Naive thymus-derived CD4-positive, alpha-beta T cell (primary cell): ENCODE measurements at regions of chr5 and their contacts with region 1.

Region 1: GRCh38 chr5:39148983-39149534 is 70.3 kb downstream of the FYB1 start:
- DNase-seq: peak in 6 of 9 donors; percentile 28 to 55 (median 48)
- ATAC-seq: peak; percentile 44
- H3K4me3 ChIP-seq: no peak overlapping the region
- H3K4me3 Mint-ChIP-seq: peak overlapping the region in 6 of 10 donors; percentile 7 to 63 (median 36)
- H3K27ac ChIP-seq: peak overlapping the region; percentile 64
- H3K27ac Mint-ChIP-seq: peak overlapping the region; percentile 66 to 94 (median 82)
- H3K4me1 ChIP-seq: peaks cover 19 to 55% of the 10 kb centered on the region in 2 donors
- H3K4me1 Mint-ChIP-seq: peaks cover 58 to 90% (median 72%) of the 10 kb centered on the region in 7 donors
- H3K27me3 ChIP-seq: no peaks in the 10 kb centered on the region
- H3K27me3 Mint-ChIP-seq: no peaks in the 10 kb centered on the region

Region 2: DNA sequence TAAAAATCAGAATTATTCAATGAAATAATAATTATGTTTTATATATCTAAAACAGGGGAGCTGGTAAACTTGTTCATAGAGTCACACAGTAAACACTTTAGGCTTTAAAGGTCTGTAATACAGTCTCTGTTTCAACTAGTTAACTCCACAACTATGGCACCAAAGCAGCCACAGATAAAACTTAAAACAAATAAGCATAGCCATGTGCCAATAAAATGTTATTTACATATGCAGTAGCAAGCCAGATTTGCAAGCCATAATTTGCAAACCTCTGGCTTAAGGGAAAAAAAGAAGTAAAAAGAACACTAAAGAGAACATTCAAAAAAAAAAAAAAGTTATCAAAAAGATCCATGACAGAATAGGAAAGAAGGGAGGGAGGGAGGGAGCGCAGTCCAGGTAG is 99.7 kb before region 1 on chr5:
- CTCF ChIA-PET with region 1: no interaction called
- POLR2A ChIA-PET with region 1: no interaction called
- intact Hi-C with region 1: no loop called
- DNase-seq: no peak
- ATAC-seq: no peak
- H3K4me3 ChIP-seq: no peak overlapping the region
- H3K4me3 Mint-ChIP-seq: peak overlapping the region in 5 of 10 donors; percentile 4 to 42 (median 15)
- H3K27ac ChIP-seq: no peak overlapping the region
- H3K27ac Mint-ChIP-seq: peak overlapping the region in 3 of 9 donors; percentile 10 to 54 (median 48)
- H3K4me1 ChIP-seq: peaks cover 4 to 16% of the 10 kb centered on the region in 2 donors
- H3K4me1 Mint-ChIP-seq: peaks cover 16 to 90% (median 82%) of the 10 kb centered on the region in 7 donors
- H3K27me3 ChIP-seq: no peaks in the 10 kb centered on the region
- H3K27me3 Mint-ChIP-seq: no peaks in the 10 kb centered on the region

Region 3: DNA sequence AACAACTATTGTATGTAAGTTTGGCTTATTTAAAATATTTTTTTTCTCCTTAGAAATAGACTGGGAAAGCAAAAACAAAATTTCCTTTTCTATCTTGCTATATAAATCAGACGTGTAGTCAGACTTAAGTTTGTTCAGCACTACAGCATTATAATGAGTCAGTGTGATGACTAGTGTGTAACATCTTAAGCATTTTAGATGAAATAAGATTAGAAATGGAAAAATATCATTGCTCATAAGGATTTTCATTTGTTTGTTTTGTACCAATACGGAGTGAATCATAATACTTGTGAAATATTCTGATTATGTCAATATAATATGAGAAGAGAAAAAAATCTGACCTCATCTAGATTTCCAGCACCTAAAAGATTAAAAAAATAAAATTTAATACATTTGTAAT is 10.2 kb before region 1 on chr5:
- CTCF ChIA-PET with region 1: interaction called, 4 read pairs
- POLR2A ChIA-PET with region 1: interaction called, 3 read pairs
- intact Hi-C with region 1: loop called in 1 of 2 experiments (anchors 1 kb)
- DNase-seq: no peak
- ATAC-seq: no peak
- H3K4me3 ChIP-seq: no peak overlapping the region
- H3K4me3 Mint-ChIP-seq: no peak overlapping the region
- H3K27ac ChIP-seq: no peak overlapping the region
- H3K27ac Mint-ChIP-seq: peak overlapping the region in 3 of 9 donors; percentile 14 to 77 (median 23)
- H3K4me1 ChIP-seq: peaks cover 6 to 10% of the 10 kb centered on the region in 2 donors
- H3K4me1 Mint-ChIP-seq: peaks cover 12 to 51% (median 31%) of the 10 kb centered on the region in 7 donors
- H3K27me3 ChIP-seq: no peaks in the 10 kb centered on the region
- H3K27me3 Mint-ChIP-seq: no peaks in the 10 kb centered on the region

Region 4: DNA sequence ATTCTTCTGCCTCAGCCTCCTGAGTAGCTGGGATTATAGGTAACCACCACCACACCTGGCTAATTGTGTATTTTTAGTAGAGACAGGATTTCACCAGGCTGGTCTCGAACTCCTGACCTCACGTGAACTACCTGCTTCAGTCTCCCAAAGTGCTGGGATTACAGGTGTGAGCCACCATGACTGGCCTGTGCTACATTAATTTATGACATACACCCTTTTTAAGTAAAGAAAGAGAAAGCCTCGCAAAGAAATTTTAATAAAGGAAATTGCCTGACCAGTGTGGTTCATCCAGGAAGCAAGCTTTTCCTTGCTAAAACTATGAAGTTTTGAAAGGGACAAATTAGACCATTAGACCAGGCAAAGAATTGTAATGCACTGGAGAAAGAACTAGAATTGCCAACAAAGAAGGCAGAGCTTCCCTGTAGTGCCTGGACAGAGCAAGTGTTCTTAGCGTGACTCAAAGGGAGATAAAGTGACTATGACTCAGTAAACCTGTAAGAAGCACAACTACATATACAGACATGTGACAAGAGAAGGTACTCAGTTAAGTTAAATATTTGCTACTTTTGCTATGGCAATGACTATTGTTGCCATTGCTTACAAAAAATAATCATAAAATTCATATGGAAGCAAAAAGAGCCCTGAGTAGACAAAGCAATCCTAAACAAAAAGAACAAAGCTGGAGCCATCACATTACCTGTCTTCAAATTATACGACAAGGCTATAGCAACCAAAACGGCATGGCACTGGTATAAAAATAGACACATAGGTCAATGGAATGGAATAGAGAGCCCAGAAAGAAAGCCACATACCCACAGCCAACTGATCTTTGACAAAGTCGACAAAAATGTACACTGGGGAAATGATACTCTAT is 15.7 kb after region 1 on chr5:
- CTCF ChIA-PET with region 1: interaction called, 3 read pairs
- POLR2A ChIA-PET with region 1: interaction called, 5 read pairs
- intact Hi-C with region 1: loop called (anchors 1 to 2 kb)
- DNase-seq: peak in 1 of 9 donors; percentile 34
- ATAC-seq: peak; percentile 71
- H3K4me3 ChIP-seq: peak overlapping the region; percentile 12
- H3K4me3 Mint-ChIP-seq: peak overlapping the region; percentile 58 to 83 (median 76)
- H3K27ac ChIP-seq: peak overlapping the region; percentile 60
- H3K27ac Mint-ChIP-seq: peak overlapping the region; percentile 78 to 96 (median 89)
- H3K4me1 ChIP-seq: peaks cover 73 to 74% of the 10 kb centered on the region in 2 donors
- H3K4me1 Mint-ChIP-seq: peaks cover 71 to 99% (median 95%) of the 10 kb centered on the region in 7 donors
- H3K27me3 ChIP-seq: no peaks in the 10 kb centered on the region
- H3K27me3 Mint-ChIP-seq: no peaks in the 10 kb centered on the region

Region 5: DNA sequence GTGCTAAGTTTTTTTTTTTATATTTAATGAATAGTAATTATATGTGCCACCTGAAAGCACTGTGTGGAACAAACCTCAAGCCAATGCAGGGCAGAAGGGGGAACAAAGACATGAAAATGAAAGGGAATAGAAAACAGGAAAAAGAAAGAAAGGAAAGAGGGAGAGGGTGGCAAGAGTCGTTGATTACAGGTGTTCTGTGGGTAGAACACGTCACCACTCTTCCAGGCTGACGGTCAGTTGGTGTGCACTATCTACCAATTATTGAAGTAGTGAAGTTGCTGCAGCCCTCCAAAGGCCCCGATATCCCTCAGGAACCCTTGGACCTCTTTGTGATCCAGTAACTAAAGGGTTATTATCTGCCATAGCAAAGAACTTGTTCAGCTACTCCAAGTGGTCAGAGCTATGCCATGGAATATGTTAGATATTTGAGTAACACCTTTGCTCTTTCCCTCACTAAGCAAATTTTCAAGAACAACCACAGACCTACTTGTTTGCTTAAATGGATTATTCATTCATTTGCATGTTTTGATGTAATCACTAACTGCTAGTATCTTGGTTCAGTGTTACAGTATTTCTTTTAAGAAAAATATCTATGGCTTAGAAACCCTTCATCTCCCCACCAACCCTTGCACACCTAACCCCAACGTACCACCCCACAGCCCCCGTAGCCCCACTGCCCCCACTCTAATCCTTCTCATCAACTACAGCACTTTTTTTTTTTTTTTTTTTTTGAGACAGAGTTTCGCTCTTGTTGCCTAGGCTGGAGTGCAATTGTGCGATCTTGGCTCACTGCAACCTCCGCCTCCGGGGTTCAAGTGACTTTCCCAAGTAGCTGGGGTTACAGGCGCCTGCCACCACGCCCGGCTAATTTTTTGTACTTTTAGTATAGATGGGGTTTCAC is 39.0 kb after region 1 on chr5:
- CTCF ChIA-PET with region 1: interaction called, 7 read pairs
- POLR2A ChIA-PET with region 1: interaction called, 14 read pairs
- intact Hi-C with region 1: loop called in 1 of 2 experiments (anchors 5 kb)
- DNase-seq: peak in 2 of 9 donors; percentile 46 to 50
- ATAC-seq: peak; percentile 45
- H3K4me3 ChIP-seq: peak overlapping the region; percentile 36
- H3K4me3 Mint-ChIP-seq: peak overlapping the region; percentile 78 to 98 (median 88)
- H3K27ac ChIP-seq: peak overlapping the region; percentile 73
- H3K27ac Mint-ChIP-seq: peak overlapping the region; percentile 92 to 99 (median 98)
- H3K4me1 ChIP-seq: peaks cover 75 to 85% of the 10 kb centered on the region in 2 donors
- H3K4me1 Mint-ChIP-seq: peaks cover 58 to 97% (median 91%) of the 10 kb centered on the region in 7 donors
- H3K27me3 ChIP-seq: no peaks in the 10 kb centered on the region
- H3K27me3 Mint-ChIP-seq: no peaks in the 10 kb centered on the region

Region 6: DNA sequence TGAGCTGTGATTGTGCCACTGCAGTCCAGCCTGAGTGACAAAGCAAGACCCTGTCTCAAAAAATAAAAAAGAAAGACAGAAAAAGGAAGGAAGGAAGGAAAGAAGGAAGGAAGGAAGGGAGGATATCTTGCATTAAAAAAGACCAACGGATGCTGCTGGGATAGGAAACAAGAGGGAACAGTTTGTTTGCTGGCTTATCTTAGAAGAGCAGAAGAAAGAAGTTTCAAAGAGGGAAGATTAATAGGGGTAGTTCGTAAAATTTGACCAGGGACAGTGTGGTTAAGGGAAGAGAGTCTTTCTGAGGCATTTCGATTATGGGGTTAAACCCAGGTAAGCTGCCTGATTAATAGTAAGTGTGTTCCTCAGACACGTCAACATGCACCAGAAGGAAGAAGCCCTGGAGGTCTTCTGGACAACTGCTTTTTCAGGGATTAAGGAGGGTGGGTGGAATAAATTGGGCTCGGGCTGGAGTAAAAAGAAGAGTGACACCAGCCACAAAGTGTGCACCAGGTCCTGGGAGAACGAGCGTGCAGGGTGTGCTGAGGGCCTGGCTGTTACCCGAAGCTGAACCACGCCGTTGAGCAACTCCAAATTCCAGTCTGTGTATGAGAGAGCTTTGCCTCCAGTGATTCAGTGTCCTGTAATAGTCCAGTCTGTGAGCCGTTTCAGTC is 45.5 kb after region 1 on chr5:
- CTCF ChIA-PET with region 1: interaction called, 7 read pairs
- POLR2A ChIA-PET with region 1: interaction called, 6 read pairs
- intact Hi-C with region 1: loop called (anchors 1 to 2 kb)
- DNase-seq: peak in 1 of 9 donors; percentile 17
- ATAC-seq: no peak
- H3K4me3 ChIP-seq: peak overlapping the region; percentile 46
- H3K4me3 Mint-ChIP-seq: peak overlapping the region; percentile 75 to 98 (median 88)
- H3K27ac ChIP-seq: peak overlapping the region; percentile 83
- H3K27ac Mint-ChIP-seq: peak overlapping the region; percentile 85 to 98 (median 94)
- H3K4me1 ChIP-seq: peaks cover 67 to 69% of the 10 kb centered on the region in 2 donors
- H3K4me1 Mint-ChIP-seq: peaks cover 52 to 78% (median 70%) of the 10 kb centered on the region in 7 donors
- H3K27me3 ChIP-seq: no peaks in the 10 kb centered on the region
- H3K27me3 Mint-ChIP-seq: no peaks in the 10 kb centered on the region

Region 7: DNA sequence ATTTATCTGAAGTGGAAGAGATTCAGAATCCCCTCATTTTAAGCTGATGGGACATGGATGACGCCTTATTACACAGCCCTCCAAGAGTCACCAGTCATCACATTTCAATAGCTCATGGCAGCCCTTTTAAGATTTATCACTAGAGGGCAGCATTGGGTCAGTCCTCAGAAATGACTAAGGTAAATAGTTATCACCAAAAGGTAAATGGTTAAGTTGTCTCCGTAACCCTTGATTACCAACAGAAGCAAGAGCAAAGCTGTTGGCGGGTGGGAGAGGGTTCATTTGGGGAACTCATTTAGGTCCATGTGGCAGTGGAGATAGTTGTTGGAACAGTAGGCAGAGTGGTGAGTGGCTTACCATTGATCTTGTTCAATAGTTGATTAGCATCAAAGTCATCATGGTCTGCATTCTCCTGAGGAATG is 227.2 kb after region 1 on chr5:
- CTCF ChIA-PET with region 1: no interaction called
- POLR2A ChIA-PET with region 1: no interaction called
- intact Hi-C with region 1: loop called in 1 of 2 experiments (anchors 5 kb)
- DNase-seq: peak in 8 of 9 donors; percentile 2 to 40 (median 26)
- ATAC-seq: peak; percentile 80
- H3K4me3 ChIP-seq: no peak overlapping the region
- H3K4me3 Mint-ChIP-seq: no peak overlapping the region
- H3K27ac ChIP-seq: no peak overlapping the region
- H3K27ac Mint-ChIP-seq: no peak overlapping the region
- H3K4me1 ChIP-seq: no peaks in the 10 kb centered on the region
- H3K4me1 Mint-ChIP-seq: peaks cover 0 to 5% (median 0%) of the 10 kb centered on the region in 7 donors
- H3K27me3 ChIP-seq: no peaks in the 10 kb centered on the region
- H3K27me3 Mint-ChIP-seq: peaks cover 0 to 32% (median 0%) of the 10 kb centered on the region in 5 donors

Region 8: GRCh38 chr5:39547553-39548154 is 398.6 kb after region 1 on chr5:
- CTCF ChIA-PET with region 1: no interaction called
- POLR2A ChIA-PET with region 1: no interaction called
- intact Hi-C with region 1: loop called (anchors 2 to 10 kb)
- DNase-seq: peak in 7 of 9 donors; percentile 14 to 49 (median 36)
- ATAC-seq: peak; percentile 50
- H3K4me3 ChIP-seq: no peak overlapping the region
- H3K4me3 Mint-ChIP-seq: peak overlapping the region in 8 of 10 donors; percentile 16 to 67 (median 50)
- H3K27ac ChIP-seq: no peak overlapping the region
- H3K27ac Mint-ChIP-seq: peak overlapping the region in 1 of 9 donors; percentile 55
- H3K4me1 ChIP-seq: no peaks in the 10 kb centered on the region
- H3K4me1 Mint-ChIP-seq: peaks cover 0 to 8% (median 5%) of the 10 kb centered on the region in 7 donors
- H3K27me3 ChIP-seq: no peaks in the 10 kb centered on the region
- H3K27me3 Mint-ChIP-seq: peaks cover 0 to 5% (median 0%) of the 10 kb centered on the region in 5 donors